ENCODE measurements at regions of chr12 and their contacts with region 1.

Region 1: DNA sequence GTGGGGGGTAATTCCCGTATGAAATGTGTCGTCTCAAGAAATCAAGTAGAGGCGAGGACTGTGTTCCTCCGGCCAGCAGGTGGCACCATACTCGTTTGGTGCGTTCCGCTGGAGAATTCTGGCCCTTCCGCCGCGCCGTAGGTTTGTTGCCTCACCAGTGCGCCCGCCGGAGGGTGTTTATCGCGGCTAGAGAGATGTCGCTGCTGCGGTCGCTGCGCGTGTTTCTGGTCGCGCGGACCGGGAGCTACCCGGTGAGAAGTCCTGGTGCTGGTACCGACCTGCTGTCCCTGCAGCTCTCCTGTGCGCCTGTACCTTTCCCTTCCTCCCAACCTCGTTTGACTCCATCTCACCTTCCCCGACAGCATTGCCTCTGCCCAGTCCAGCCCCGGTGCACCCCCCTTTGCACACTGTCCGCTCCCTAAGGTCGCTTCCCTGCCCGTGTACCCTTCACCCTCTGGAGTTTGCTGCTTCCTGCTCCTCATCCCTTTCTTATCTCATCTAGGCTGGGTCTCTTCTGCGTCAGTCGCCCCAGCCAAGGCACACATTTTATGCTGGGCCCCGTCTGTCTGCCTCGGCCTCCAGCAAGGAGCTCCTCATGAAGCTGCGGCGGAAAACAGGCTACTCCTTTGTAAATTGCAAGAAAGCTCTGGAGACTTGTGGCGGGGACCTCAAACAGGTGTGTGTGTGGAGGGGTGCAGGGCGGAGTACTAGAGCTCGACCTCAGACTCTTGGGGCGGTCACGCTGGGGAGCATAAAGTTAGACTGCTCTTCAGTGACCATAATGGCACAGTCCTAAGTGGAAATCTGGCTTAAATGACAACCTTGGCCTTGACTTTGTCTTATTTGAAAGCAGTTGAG is at the start of gene TSFM:
- DNase-seq: peak; percentile 77 to 98
- H3K4me3 ChIP-seq: peak within 1 kb of the TSS; percentile 76 to 99 (median 98)
- H3K27ac ChIP-seq: peak within 1 kb of the TSS; percentile 58; the same call in 1 of the 2 replicates
- H3K4me1 ChIP-seq: no peaks in the 10 kb centered on the region
- H3K27me3 ChIP-seq: no peaks in the 10 kb centered on the region
- CTCF ChIP-seq: peak; percentile 85 to 97 (median 96)
- EP300 ChIP-seq: no peak
- POLR2A ChIP-seq: peak in 1 of 2 experiments; percentile 96; a peak in 2 of 3 replicates
- RAD21 ChIP-seq: peak in 1 of 2 experiments; percentile 40; a peak in 1 of 4 replicates
- total RNA-seq, gene TSFM: 47.9 and 49.8 TPM in 2 replicates

Region 2: DNA sequence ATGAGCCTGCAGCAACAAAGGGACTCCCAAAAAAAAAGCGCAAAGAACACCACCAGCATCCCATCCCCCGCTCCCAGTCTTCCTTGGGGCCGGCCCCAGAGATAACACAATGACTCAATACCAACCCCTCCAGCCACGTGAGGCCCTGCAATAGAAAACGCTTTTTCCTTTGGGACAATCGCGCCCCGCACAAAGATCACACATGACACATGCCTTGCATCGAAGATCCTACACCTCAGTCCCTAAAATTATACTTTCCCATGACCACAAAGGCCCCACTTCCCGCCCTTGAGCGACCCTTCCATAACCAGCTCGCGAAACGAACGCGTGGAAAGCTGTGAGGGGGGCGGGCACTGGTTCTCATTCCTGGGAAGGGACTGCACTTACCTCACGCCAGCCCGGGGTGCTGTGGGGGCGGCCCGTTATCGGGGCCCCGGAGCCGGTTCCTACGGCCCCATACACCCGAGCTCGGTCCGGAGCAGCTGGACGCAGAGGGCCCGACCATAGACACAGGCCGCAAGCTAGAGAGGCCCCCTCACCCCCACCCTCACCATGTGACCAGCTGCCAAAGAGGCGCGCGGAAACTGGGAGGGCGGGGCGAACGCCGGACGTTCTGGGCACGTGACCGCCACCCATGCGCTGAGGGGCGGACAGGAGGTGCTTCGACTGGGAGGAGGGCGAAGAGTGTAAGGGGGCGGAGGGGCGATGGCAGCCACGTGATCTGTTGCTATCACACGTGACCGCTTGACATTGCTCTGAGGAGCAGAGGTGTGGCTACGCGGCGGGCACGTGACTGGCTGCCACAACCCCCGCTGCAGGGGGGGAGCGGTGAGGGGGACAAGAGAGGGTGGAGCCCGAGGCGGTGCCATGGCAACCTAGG is 30.8 kb before region 1 on chr12 and contains the start of gene CDK4:
- CTCF ChIA-PET with region 1: interaction called, 14 read pairs
- POLR2A ChIA-PET with region 1: interaction called, 4 read pairs
- DNase-seq: peak; percentile 99 to 100
- H3K4me3 ChIP-seq: peak within 1 kb of the TSS; percentile 96 to 99 (median 98)
- H3K27ac ChIP-seq: peak within 1 kb of the TSS; percentile 86
- H3K4me1 ChIP-seq: peaks cover 3 to 26% (median 7%) of the 10 kb centered on the region in 4 experiments; a peak in 6 of 7 replicates
- H3K27me3 ChIP-seq: peaks cover 8 to 22% (median 20%) of the 10 kb centered on the region in 4 experiments
- CTCF ChIP-seq: no peak
- EP300 ChIP-seq: peak in 1 of 2 experiments; percentile 76; a peak in 1 of 3 replicates
- POLR2A ChIP-seq: peak; percentile 79
- RAD21 ChIP-seq: no peak
- total RNA-seq, gene CDK4: 174 and 180 TPM in 2 replicates

Region 3: DNA sequence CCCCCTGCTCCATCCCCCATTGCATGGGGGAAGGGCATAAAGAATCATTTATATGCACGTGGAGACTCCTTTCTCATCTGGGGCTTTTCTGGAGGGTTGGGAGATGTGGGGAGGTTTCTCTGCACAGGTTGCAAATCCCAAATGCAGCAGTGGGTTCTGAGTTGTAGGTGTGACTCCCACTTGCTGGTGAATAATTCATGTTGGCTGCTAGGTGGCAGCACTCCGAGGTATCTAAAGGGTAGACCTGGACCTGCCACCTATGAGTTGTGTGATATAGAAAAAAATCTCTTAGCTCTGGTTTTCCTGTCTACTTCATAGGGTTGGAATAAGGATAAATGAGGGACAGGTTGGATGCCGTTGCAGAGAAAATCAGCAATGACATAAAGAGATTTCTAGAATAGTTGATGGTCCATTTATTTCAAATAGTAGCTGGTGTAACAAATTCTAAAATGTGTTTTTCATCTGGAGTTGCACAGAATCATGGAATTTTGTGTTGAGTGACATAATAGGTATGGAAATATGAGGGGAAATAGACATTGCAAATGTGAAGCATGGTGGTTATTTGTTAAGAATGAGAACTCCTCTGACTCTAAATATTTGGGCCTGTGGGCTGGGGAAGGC is 23.4 kb before region 1 on chr12:
- CTCF ChIA-PET with region 1: interaction called, 20 read pairs
- POLR2A ChIA-PET with region 1: interaction called, 6 read pairs
- DNase-seq: no peak
- H3K4me3 ChIP-seq: no peak overlapping the region
- H3K27ac ChIP-seq: no peak overlapping the region
- H3K4me1 ChIP-seq: peaks cover 0 to 9% (median 6%) of the 10 kb centered on the region in 4 experiments; a peak in 6 of 7 replicates
- H3K27me3 ChIP-seq: peaks cover 12 to 41% (median 33%) of the 10 kb centered on the region in 4 experiments
- CTCF ChIP-seq: peak; percentile 47 to 66 (median 59)
- EP300 ChIP-seq: no peak
- POLR2A ChIP-seq: no peak
- RAD21 ChIP-seq: peak in 1 of 2 experiments; percentile 7; a peak in 1 of 4 replicates

Region 4: GRCh38 chr12:57765042-57765697 is 17.7 kb before region 1 on chr12:
- CTCF ChIA-PET with region 1: interaction called, 28 read pairs
- POLR2A ChIA-PET with region 1: interaction called, 19 read pairs
- DNase-seq: peak in 1 of 2 experiments; percentile 80
- H3K4me3 ChIP-seq: peak overlapping the region; percentile 39 to 66 (median 64)
- H3K27ac ChIP-seq: no peak overlapping the region
- H3K4me1 ChIP-seq: peaks cover 13 to 22% (median 19%) of the 10 kb centered on the region in 4 experiments
- H3K27me3 ChIP-seq: peaks cover 22 to 39% (median 37%) of the 10 kb centered on the region in 4 experiments
- CTCF ChIP-seq: peak in 2 of 3 experiments; percentile 41 to 61; a peak in 3 of 4 replicates
- EP300 ChIP-seq: no peak
- POLR2A ChIP-seq: no peak; a peak in 1 of 3 replicates
- RAD21 ChIP-seq: peak; percentile 1 to 18; a peak in 2 of 4 replicates

Region 5: GRCh38 chr12:57771708-57772428 is 11.0 kb before region 1 on chr12 and contains the start of gene METTL1:
- CTCF ChIA-PET with region 1: interaction called, 28 read pairs
- POLR2A ChIA-PET with region 1: interaction called, 22 read pairs
- DNase-seq: peak; percentile 91 to 96
- H3K4me3 ChIP-seq: peak within 1 kb of the TSS; percentile 79 to 99 (median 95)
- H3K27ac ChIP-seq: peak within 1 kb of the TSS; percentile 99
- H3K4me1 ChIP-seq: peaks cover 3 to 10% (median 5%) of the 10 kb centered on the region in 4 experiments; a peak in 5 of 7 replicates
- H3K27me3 ChIP-seq: peaks cover 0 to 7% (median 3%) of the 10 kb centered on the region in 4 experiments; a peak in 4 of 7 replicates
- CTCF ChIP-seq: peak in 1 of 3 experiments; percentile 1; a peak in 1 of 4 replicates
- EP300 ChIP-seq: 0 out of 3 replicates have a peak, but pooled peaks of 1 of the 2 experiments have one; percentile 66
- POLR2A ChIP-seq: peak in 1 of 2 experiments; percentile 98; a peak in 2 of 3 replicates
- RAD21 ChIP-seq: no peak
- total RNA-seq, gene METTL1: 41.9 and 46.0 TPM in 2 replicates

Region 6: GRCh38 chr12:57793920-57794319 is 11.1 kb after region 1 on chr12:
- CTCF ChIA-PET with region 1: interaction called, 14 read pairs
- POLR2A ChIA-PET with region 1: interaction called, 10 read pairs
- DNase-seq: no peak
- H3K4me3 ChIP-seq: no peak overlapping the region
- H3K27ac ChIP-seq: no peak overlapping the region
- H3K4me1 ChIP-seq: no peaks in the 10 kb centered on the region
- H3K27me3 ChIP-seq: no peaks in the 10 kb centered on the region
- CTCF ChIP-seq: no peak
- EP300 ChIP-seq: no peak
- POLR2A ChIP-seq: no peak
- RAD21 ChIP-seq: no peak

Region 7: DNA sequence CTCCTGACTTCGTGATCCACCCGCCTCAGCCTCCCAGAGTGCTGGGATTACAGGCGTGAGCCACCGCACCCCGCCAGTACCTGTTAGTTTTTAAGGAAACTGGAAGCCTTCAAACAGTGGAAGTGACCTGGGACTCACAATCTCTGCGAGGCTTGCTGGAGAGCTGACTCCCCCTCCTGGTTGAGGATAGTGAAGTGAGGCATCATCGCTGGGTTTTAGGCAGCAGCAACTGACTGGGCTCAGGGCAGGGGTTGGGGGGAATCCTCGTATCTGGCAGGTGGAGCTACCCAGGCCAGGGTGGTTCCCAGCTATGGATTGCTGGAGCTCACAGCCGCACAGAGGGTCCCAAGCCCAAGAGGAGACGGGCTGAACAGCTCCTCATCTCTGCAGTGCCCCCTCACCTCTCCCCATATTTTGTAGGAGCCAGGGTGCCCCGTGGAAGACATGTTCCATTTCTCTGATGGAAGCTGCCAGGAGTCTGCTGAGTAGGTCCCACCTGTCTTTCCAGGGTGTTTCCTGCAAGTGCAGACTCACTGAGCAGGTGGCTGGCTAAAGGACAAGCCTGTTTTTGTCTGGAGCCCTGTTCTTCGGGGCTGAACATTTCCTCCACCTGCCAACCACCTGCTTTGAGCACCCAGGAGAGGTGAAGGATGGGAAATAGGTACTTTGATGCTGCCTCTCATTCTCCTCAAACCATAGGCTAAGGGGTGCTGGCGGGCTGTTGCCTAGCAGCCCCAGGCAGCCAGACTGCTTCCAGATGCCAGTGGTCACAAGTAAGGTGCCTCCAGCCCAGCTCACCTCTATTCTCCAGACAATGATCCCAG is 32.6 kb after region 1 on chr12:
- CTCF ChIA-PET with region 1: interaction called, 11 read pairs
- POLR2A ChIA-PET with region 1: interaction called, 7 read pairs
- DNase-seq: peak; percentile 50 to 62
- H3K4me3 ChIP-seq: no peak overlapping the region
- H3K27ac ChIP-seq: no peak overlapping the region
- H3K4me1 ChIP-seq: no peaks in the 10 kb centered on the region
- H3K27me3 ChIP-seq: no peaks in the 10 kb centered on the region
- CTCF ChIP-seq: peak; percentile 63 to 70 (median 67)
- EP300 ChIP-seq: no peak
- POLR2A ChIP-seq: no peak
- RAD21 ChIP-seq: peak; percentile 57 to 70

Region 8: GRCh38 chr12:58051378-58051777 is 268.5 kb after region 1 on chr12:
- CTCF ChIA-PET with region 1: no interaction called
- POLR2A ChIA-PET with region 1: no interaction called
- DNase-seq: no peak
- H3K4me3 ChIP-seq: no peak overlapping the region
- H3K27ac ChIP-seq: no peak overlapping the region
- H3K4me1 ChIP-seq: no peaks in the 10 kb centered on the region
- H3K27me3 ChIP-seq: no peaks in the 10 kb centered on the region
- CTCF ChIP-seq: no peak
- EP300 ChIP-seq: no peak
- POLR2A ChIP-seq: no peak
- RAD21 ChIP-seq: no peak